ENCODE measurements at regions of chr9 and their contacts with region 1.

Region 1: GRCh38 chr9:122827761-122828093 is 661 bp downstream of the PDCL start:
- DNase-seq: no peak
- H3K4me3 ChIP-seq: peak overlapping the region; percentile 78 to 100 (median 92)
- H3K27ac ChIP-seq: peak overlapping the region; percentile 93 to 99 (median 96)
- H3K4me1 ChIP-seq: peaks cover 22 to 52% (median 30%) of the 10 kb centered on the region in 4 donors
- H3K27me3 ChIP-seq: no peaks in the 10 kb centered on the region
- CTCF ChIP-seq: no peak
- EP300 ChIP-seq: no peak
- POLR2A ChIP-seq: no peak

Region 2: GRCh38 chr9:122264360-122265148 is 563.2 kb before region 1 on chr9 and contains the starts of genes MRRF and RBM18:
- intact Hi-C with region 1: loop called (anchors 10 kb)
- DNase-seq: peak; percentile 98
- H3K4me3 ChIP-seq: peak within 1 kb of the TSS; percentile 68 to 87 (median 72)
- H3K27ac ChIP-seq: peak within 1 kb of the TSS; percentile 89 to 92 (median 90)
- H3K4me1 ChIP-seq: peaks cover 46 to 61% (median 51%) of the 10 kb centered on the region in 4 donors
- H3K27me3 ChIP-seq: no peaks in the 10 kb centered on the region
- CTCF ChIP-seq: no peak
- EP300 ChIP-seq: no peak
- POLR2A ChIP-seq: peak; percentile 63
- total RNA-seq, gene MRRF: 20.5 to 29.2 (median 28.5) TPM
- total RNA-seq, gene RBM18: 10.1 to 14.6 (median 13.3) TPM

Region 3: DNA sequence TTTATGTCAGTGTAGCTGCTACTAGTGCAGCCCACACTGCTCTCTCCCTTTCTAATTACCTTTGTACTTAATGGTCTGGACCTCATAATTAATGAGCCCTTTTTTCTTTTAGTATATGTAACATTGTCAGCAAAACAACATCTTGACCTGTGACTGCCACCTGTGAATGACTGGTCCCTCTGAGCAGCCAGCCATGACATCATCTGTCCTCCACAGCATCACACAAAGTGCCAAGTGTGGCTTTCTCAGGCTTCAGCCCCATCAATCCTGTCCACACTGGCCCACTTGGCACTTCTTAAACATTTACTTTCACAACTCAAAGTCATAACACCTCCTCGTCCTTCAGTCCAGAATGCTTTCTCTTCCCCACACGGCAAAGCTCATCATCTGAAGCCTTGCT is 310.4 kb after region 1 on chr9:
- intact Hi-C with region 1: no loop called
- DNase-seq: no peak
- H3K4me3 ChIP-seq: no peak overlapping the region
- H3K27ac ChIP-seq: no peak overlapping the region
- H3K4me1 ChIP-seq: peaks cover 0 to 13% (median 2%) of the 10 kb centered on the region in 4 donors
- H3K27me3 ChIP-seq: no peaks in the 10 kb centered on the region
- CTCF ChIP-seq: no peak
- EP300 ChIP-seq: no peak
- POLR2A ChIP-seq: no peak